ENCODE measurements at regions of chr2 and their contacts with region 1.

Region 1: DNA sequence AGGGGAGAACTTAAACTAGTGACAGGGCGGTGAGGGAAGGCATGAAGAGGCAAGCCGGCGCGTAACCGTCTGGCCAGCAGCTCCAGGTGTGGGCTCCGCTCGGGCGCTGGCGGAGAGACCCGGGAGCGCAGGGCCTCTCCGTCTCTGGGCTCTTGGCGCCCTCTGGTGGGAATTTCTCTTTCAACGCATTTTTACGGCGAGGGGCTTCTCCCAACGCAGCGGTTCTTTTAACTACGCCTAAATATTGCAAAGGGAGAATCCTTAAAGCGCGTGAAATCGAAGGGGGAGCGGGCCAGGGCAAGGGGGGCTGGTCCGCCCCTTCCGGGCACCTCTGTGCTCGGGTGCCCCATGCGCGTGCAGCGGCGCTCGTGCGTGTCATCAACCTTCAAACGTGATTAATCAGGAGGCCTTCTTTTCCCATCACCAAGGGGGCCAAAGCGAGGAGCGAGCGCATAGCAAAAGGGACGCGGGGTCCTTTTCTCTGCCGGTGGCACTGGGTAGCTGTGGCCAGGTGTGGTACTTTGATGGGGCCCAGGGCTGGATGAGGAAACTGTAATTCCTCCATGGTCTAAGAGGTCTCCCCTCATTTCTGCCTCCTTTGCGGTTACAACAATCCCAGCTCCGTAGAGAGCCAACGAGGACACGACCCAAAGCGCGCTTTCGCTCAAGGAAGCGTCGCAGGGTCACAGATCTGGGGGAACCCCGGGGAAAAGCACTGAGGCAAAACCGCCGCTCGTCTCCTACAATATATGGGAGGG is 762 bp upstream of the GAD1 start:
- DNase-seq: peak in 4 of 10 donors; percentile 31 to 67 (median 45)
- H3K4me3 ChIP-seq: peak overlapping the region; percentile 25 to 74 (median 56)
- H3K27ac ChIP-seq: peak overlapping the region in 37 of 59 donors; percentile 4 to 73 (median 43)
- H3K27me3 ChIP-seq: peaks cover 11 to 85% (median 79%) of the 10 kb centered on the region in 45 donors
- CTCF ChIP-seq: peak; percentile 23 to 88 (median 76)

Region 2: GRCh38 chr2:170221317-170222288 is 594.3 kb before region 1 on chr2:
- intact Hi-C with region 1: loop called in 1 of 2 experiments (anchors 10 kb)
- DNase-seq: no peak
- H3K4me3 ChIP-seq: no peak overlapping the region
- H3K27ac ChIP-seq: no peak overlapping the region
- H3K27me3 ChIP-seq: no peaks in the 10 kb centered on the region
- CTCF ChIP-seq: no peak

Region 3: DNA sequence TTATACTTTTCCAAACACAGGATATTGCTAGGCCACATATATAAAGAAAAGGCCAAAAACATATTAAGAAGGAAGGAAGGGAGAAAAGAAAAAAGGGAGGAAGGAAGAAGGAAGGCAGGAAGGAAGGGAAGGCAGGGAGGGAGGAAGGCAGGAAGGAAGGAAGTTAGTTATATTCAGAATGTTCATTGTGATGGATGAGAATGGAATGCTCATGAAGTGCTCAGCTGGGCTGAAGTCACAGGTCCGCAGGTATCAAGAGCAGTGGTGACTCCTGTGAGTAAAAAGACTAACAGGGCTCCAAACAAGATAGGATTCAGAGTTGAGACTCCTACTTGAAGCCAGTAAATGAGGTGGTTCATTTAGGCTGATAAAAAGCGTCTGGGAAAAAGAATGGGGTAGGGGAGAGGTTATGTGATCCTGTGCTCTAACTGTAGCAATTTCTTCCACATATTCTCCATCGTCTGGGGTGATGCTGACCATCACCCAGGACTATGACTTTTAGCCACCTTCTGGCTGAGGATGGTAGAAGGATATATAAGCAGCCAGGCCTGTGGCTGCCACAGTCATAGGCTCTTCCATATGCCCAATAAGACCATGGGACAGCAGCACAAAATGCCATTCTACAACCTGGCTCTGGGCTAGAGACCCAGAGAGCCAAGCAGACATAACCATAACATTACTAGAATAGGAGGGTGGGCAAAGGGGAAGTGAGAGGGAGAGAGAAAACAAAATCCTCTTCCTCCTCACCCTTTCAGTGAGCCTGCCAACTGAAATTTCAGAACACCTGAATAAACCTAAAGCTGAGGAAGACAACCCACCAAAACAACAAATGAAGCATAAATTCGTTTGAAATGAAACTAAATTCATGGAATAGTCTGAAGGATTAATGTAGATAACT is 464.7 kb before region 1 on chr2:
- intact Hi-C with region 1: no loop called
- DNase-seq: no peak
- H3K4me3 ChIP-seq: no peak overlapping the region
- H3K27ac ChIP-seq: no peak overlapping the region
- H3K27me3 ChIP-seq: peaks cover 0 to 8% (median 0%) of the 10 kb centered on the region in 45 donors
- CTCF ChIP-seq: no peak

Region 4: GRCh38 chr2:170369894-170370293 is 446.0 kb before region 1 on chr2:
- intact Hi-C with region 1: loop called (anchors 2 to 5 kb)
- DNase-seq: no peak
- H3K4me3 ChIP-seq: no peak overlapping the region
- H3K27ac ChIP-seq: no peak overlapping the region
- H3K27me3 ChIP-seq: peaks cover 0 to 73% (median 34%) of the 10 kb centered on the region in 45 donors
- CTCF ChIP-seq: peak in 55 of 56 donors; percentile 8 to 76 (median 47)

Region 5: DNA sequence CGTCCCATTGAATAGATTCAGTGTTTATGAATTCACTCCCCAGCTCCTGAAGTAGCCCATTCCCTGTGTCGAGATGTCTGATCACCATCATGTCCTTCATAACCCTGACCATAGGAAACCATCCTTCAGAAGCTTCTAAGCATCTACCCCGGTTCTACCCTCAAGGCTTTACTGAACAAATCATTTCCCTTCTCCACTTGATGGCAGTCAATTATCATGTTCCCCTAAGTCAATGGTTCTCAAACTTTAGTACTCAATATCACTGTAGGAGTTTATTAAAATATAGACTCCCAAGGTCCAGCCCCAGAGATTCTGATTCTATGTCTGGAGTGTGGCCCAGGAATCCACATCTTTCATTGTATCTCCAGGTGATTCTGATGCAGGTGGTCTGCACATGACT is 329.2 kb before region 1 on chr2:
- intact Hi-C with region 1: loop called (anchors 1 to 2 kb)
- DNase-seq: no peak
- H3K4me3 ChIP-seq: no peak overlapping the region
- H3K27ac ChIP-seq: no peak overlapping the region
- H3K27me3 ChIP-seq: peaks cover 0 to 1% (median 0%) of the 10 kb centered on the region in 45 donors
- CTCF ChIP-seq: peak in 52 of 56 donors; percentile 17 to 77 (median 50)

Region 6: GRCh38 chr2:170715062-170715931 is 100.6 kb before region 1 on chr2 and contains the start of gene SP5:
- intact Hi-C with region 1: loop called in 1 of 2 experiments (anchors 10 kb)
- DNase-seq: no peak
- H3K4me3 ChIP-seq: peak within 1 kb of the TSS; percentile 26 to 75 (median 56)
- H3K27ac ChIP-seq: peak within 1 kb of the TSS in 1 of 59 donors; percentile 5
- H3K27me3 ChIP-seq: peaks cover 0 to 100% (median 85%) of the 10 kb centered on the region in 45 donors
- CTCF ChIP-seq: no peak
- total RNA-seq, gene SP5: 0.19 to 4.2 (median 0.61) TPM in 85 of 120 experiments, not detected in the others

Measured in dorsolateral prefrontal cortex (tissue), 120 donors.